ENCODE measurements at regions of chr19 and their contacts with region 1.

Region 1: GRCh38 chr19:10864538-10864899 is 6.8 kb upstream of the CARM1 start:
- DNase-seq: no peak
- H3K4me3 ChIP-seq: no peak overlapping the region
- CTCF ChIP-seq: peak; percentile 91

Region 2: GRCh38 chr19:10717356-10718204 is 146.9 kb before region 1 on chr19 and contains the start of gene DNM2:
- CTCF ChIA-PET with region 1: interaction called, 211 read pairs
- POLR2A ChIA-PET with region 1: interaction called, 3 read pairs
- DNase-seq: peak; percentile 100
- H3K4me3 ChIP-seq: peak within 1 kb of the TSS; percentile 96
- CTCF ChIP-seq: peak; percentile 71

Region 3: DNA sequence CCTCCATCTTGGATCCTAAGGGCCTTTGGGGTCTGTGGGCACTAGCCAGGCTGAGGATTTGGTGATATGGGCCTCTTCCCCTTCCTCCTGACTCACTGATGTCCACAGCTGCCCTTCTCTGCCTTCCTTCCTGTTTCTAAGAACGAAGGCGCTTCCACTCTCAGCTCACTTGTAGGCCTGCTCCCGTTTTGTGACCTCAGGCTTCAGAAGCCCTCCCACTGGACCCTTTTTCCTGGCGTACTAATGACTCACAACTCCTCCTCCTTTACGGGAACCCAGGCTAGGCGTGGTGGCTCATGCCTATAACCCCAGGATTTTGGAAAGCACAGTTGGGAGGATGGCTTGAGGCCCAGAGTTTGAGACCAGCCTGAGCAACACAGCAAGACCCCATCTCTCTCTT is 84.2 kb before region 1 on chr19:
- CTCF ChIA-PET with region 1: interaction called, 10 read pairs
- POLR2A ChIA-PET with region 1: no interaction called
- DNase-seq: no peak
- H3K4me3 ChIP-seq: no peak overlapping the region
- CTCF ChIP-seq: no peak

Region 4: DNA sequence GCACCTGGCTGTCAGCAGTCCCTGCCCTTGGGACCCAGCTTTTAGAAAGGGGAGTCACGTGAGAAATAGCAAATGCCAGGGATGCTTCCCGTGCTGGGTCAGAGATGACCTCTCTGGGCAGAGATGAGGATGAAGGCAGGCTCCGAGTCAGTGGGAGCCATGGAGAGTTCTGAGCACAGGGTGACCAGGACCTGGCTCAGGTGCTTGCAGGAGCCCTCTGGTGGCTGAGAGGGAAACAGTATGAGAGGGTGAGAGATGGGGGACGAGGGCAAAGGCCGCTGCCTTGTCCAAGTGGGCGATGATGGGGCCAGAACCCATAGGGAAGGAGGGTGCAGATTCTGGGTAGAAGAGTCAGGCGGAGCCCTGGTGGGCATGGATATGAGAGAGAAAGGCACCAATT is 44.3 kb before region 1 on chr19:
- CTCF ChIA-PET with region 1: interaction called, 14 read pairs
- POLR2A ChIA-PET with region 1: interaction called, 5 read pairs
- DNase-seq: no peak
- H3K4me3 ChIP-seq: no peak overlapping the region
- CTCF ChIP-seq: no peak

Region 5: DNA sequence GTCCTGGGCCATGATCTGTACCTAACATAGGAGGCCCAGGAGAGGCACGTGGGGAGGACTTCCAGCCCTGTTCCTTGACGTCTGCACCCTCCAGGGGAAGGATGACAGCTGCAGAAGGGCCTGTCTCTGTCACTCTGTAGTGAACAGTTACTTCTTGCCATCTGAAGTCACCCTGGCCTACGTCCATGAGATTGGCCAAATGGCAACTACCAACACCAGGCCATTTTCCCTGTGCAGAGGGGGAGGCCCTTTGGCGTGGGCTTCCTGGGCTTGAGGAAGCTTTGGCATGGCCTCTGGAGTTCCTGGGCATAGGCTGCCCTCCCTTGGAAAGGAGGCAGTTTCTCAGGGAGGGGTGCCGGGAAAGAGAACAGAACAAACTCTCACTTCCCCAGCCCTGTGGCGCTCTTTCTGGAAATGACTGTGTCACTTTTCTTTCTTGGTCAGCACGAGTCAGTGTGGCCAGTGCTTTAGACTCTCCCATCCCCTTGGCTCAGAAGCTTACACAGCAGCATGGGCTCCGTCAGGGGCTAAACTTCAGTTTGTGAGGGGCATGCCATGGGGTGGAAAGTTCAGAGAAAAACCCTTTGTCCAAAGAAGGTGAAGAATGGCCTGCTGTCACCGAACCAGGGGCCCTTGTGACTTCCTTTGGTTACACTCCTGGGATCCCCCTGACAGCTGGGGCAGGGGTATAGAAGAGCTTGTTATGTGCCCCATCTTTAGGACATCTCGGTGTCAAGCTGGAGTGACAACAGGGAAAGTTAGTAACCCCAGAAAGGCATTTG is 12.1 kb after region 1 on chr19:
- CTCF ChIA-PET with region 1: interaction called, 44 read pairs
- POLR2A ChIA-PET with region 1: no interaction called
- DNase-seq: no peak
- H3K4me3 ChIP-seq: no peak overlapping the region
- CTCF ChIP-seq: no peak

Region 6: GRCh38 chr19:10936661-10937084 is 72.2 kb after region 1 on chr19:
- CTCF ChIA-PET with region 1: interaction called, 10 read pairs
- POLR2A ChIA-PET with region 1: no interaction called
- DNase-seq: peak; percentile 19
- H3K4me3 ChIP-seq: no peak overlapping the region
- CTCF ChIP-seq: peak; percentile 62

Region 7: DNA sequence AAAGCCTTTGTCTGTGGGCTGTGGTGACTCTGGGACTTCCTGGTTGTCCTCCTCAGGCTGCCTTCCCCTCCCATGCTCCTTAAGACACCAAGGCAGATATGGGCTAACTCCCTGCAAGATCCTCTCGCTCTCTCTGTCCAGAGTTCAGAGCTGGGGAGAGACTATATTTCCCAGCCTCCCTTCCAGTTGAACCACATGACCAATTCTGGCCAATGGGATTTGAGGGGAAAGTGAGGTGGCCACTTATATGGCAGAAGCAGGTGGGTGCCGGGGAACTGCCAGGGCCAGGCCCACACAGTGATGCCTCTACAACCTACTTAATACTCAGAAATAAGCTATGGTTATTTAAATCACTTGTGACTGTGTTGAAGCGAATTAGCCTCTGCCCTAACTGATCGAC is 358.7 kb after region 1 on chr19:
- CTCF ChIA-PET with region 1: no interaction called
- POLR2A ChIA-PET with region 1: no interaction called
- DNase-seq: no peak
- H3K4me3 ChIP-seq: no peak overlapping the region
- CTCF ChIP-seq: no peak

Measured in AG04449 (cell line).